Pancreas (tissue), 10 donors: ENCODE measurements at regions of chr20 and their contacts with region 1.

Region 1: GRCh38 chr20:38645980-38646858 is 44.6 kb downstream of the ARHGAP40 start:
- DNase-seq: peak; percentile 52 to 97 (median 81)
- ATAC-seq: peak; percentile 95 to 100 (median 99)
- H3K4me3 ChIP-seq: peak overlapping the region in 1 of 4 donors; percentile 22
- H3K27ac ChIP-seq: no peak overlapping the region
- H3K4me1 ChIP-seq: peaks cover 0 to 4% (median 0%) of the 10 kb centered on the region in 3 donors
- H3K27me3 ChIP-seq: peaks cover 0 to 6% (median 0%) of the 10 kb centered on the region in 4 donors
- CTCF ChIP-seq: peak; percentile 93 to 97 (median 96)

Region 2: GRCh38 chr20:38270869-38271605 is 375.2 kb before region 1 on chr20:
- intact Hi-C with region 1: no loop called
- DNase-seq: no peak
- ATAC-seq: peak in 3 of 4 donors; percentile 62 to 67 (median 65)
- H3K4me3 ChIP-seq: no peak overlapping the region
- H3K27ac ChIP-seq: no peak overlapping the region
- H3K4me1 ChIP-seq: no peaks in the 10 kb centered on the region
- H3K27me3 ChIP-seq: no peaks in the 10 kb centered on the region
- CTCF ChIP-seq: no peak

Region 3: DNA sequence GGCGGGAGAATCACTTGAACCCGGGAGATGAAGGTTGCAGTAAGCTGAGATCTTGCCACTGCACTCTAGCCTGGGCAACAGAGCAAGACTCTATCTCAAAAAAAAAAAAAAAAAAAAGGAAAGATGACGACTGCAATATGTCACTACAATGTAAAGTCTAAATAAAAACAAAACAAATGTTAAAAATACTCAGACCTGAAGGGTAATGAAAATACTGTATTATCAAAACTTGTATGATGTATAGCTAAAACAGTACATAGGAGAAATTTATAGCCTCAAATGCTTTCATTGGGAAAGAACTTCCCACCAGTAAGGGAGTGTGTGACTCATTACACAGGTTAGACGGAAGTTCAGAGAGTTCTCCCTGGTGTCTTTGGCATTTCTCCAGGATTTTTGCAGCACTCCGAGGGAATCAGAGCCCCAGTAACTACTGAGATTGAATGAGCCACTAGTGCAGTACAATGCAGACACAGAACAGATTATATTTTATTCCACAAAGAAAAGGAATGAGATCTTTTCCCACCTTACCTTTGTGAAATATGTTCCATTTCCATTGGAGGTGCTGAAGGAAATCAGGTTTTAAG is 186.1 kb before region 1 on chr20:
- intact Hi-C with region 1: no loop called
- DNase-seq: peak in 3 of 6 donors; percentile 27 to 44 (median 39)
- ATAC-seq: peak; percentile 85 to 96 (median 95)
- H3K4me3 ChIP-seq: no peak overlapping the region
- H3K27ac ChIP-seq: peak overlapping the region in 1 of 4 donors; percentile 12
- H3K4me1 ChIP-seq: peaks cover 0 to 3% (median 0%) of the 10 kb centered on the region in 3 donors
- H3K27me3 ChIP-seq: no peaks in the 10 kb centered on the region
- CTCF ChIP-seq: no peak

Region 4: GRCh38 chr20:38751360-38751976 is 105.2 kb after region 1 on chr20:
- intact Hi-C with region 1: loop called in 2 of 3 experiments (anchors 2 to 10 kb)
- DNase-seq: no peak
- ATAC-seq: no peak
- H3K4me3 ChIP-seq: no peak overlapping the region
- H3K27ac ChIP-seq: no peak overlapping the region
- H3K4me1 ChIP-seq: peaks cover 0 to 16% (median 8%) of the 10 kb centered on the region in 3 donors
- H3K27me3 ChIP-seq: no peaks in the 10 kb centered on the region
- CTCF ChIP-seq: peak; percentile 29 to 40 (median 33)

Region 5: DNA sequence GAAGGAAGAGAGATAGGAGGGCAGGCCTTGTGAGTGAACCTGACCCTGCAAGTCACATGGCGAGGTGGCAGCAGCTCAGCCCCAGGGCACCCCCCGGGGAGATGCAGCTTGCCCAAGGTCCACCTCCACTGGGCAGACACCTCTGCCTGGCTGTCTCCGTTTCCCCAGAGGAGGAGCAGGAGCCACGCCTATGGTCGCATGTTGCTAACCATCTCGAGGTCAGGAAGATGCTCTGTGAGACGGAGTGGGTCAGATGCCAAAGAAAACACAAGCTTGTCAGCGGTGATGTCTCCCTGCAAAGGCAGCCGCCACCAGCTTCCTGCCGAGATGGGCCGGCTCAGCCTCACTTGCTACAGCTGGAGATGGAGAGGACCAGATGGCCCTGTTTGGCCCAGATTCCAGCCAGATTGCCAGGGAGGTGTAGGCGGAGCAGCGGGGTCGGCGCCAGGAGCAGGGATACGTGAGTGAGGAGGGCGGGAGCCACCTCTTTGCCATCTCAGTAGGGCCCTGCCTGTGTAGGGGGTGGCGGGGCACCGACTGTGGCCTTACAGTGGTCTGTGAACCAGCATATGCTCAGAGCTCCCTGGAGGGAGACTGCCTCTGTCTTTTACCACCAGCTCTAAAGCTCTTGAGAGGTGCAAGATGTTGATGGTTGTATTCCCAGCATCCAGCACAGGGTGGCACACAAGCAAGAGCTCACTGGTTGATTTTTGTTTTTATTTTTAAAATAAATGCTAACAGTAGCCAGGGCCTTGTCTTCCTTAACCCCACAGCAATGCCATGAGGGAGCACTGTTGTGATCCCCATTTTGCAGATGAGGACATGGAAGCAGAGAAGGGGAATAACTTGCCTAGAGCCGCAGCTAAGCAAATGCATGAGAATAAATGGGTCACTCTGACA is 237.1 kb after region 1 on chr20:
- intact Hi-C with region 1: loop called in 1 of 3 experiments (anchors 10 kb)
- DNase-seq: peak in 1 of 6 donors; percentile 42
- ATAC-seq: peak in 1 of 4 donors; percentile 36
- H3K4me3 ChIP-seq: no peak overlapping the region
- H3K27ac ChIP-seq: no peak overlapping the region
- H3K4me1 ChIP-seq: no peaks in the 10 kb centered on the region
- H3K27me3 ChIP-seq: no peaks in the 10 kb centered on the region
- CTCF ChIP-seq: no peak

Region 6: DNA sequence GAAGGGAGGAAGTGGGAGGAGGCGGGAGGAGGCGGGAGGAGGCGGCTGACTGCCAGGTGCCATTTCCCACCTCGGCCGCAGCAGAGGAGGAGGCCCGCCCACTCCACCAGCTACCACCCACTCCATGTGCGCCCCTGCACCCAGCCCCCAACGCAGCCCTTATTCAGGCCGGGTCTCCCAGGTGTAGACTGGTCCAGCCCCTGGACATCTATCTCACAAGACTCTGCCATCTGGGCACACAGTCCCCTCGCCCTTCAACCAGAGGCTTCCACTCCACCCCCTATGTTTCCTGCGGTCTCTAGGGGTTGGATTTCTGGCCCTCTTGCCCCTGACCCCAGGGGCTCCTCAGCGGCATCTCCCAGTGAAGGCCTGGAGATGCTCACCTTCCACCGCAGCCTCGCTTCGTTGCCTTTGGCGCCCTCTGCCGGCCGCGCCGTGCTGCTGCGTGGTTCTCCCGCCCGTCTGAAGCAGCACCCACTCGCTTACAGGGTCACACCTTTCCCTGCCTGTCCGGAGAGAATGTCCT is 247.4 kb after region 1 on chr20:
- intact Hi-C with region 1: loop called in 2 of 3 experiments (anchors 10 kb)
- DNase-seq: peak in 4 of 6 donors; percentile 26 to 92 (median 38)
- ATAC-seq: peak; percentile 83 to 94 (median 90)
- H3K4me3 ChIP-seq: peak overlapping the region in 2 of 4 donors; percentile 11 to 24
- H3K27ac ChIP-seq: no peak overlapping the region
- H3K4me1 ChIP-seq: peaks cover 0 to 3% (median 0%) of the 10 kb centered on the region in 3 donors
- H3K27me3 ChIP-seq: no peaks in the 10 kb centered on the region
- CTCF ChIP-seq: peak; percentile 80 to 96 (median 92)